Activated CD4-positive, alpha-beta T cell treated with anti-CD3 and anti-CD28 coated beads for 36 hours (primary cell): ENCODE measurements at regions of chr7 and their contacts with region 1.

Region 1: GRCh38 chr7:140696680-140697446 is at the start of gene NDUFB2:
- DNase-seq: peak; percentile 84
- ATAC-seq: peak; percentile 91
- H3K4me3 Mint-ChIP-seq: peak within 1 kb of the TSS; percentile 90
- H3K27ac Mint-ChIP-seq: peak within 1 kb of the TSS; percentile 97
- H3K4me1 Mint-ChIP-seq: peaks cover 30% of the 10 kb centered on the region
- H3K27me3 Mint-ChIP-seq: no peaks in the 10 kb centered on the region
- total RNA-seq, gene NDUFB2: 83.8 to 162 TPM

Region 2: DNA sequence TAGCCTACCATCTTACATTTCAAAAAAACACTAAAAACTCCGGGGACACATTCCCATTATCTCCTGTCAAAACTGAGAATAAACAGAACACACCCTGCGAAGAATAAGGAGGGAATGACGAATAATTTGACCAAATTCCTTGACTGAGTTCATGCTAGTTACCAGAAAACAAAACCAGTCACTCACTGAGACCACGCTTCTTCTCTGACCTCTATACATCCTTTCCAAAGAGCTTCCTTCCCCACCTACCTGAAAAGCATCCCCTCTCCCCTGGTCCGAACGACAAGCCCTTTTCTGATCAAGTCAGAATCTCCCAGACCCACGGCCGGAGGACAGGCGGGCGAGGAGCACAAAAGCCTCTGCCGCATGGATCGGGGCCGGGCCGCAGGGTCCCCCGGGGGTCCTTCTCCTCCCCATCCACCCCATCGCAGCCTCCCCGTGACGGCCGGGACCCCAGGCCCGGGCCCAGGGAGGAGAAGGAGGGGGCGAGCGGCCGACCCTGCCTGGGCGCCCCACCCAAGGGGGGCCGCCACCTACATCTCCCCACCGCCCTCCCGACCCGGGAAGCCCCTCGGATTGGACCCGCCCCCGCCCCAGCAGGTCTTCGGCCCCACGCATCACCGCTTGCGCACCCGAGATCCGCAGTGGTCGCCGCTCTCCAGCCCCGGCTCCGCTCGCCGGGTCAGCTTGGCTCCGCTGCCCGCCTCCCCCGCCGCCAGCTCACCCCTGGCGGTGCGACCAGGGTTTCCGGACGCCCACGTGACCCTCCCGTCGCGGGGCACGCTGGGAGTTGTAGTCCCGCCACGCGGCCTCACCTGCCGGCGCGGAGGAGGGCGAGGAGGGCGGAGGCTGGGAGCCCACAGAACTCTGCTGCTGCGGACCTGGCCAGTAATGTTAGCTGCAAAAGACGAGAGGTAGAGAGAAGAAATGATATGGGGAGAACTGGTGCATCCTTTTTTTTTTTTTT is 298.8 kb before region 1 on chr7 and contains the start of gene SLC37A3:
- CTCF ChIA-PET with region 1: no interaction called
- POLR2A ChIA-PET with region 1: no interaction called
- intact Hi-C with region 1: loop called in 1 of 2 experiments (anchors 2 kb)
- DNase-seq: peak; percentile 94
- ATAC-seq: peak; percentile 86
- H3K4me3 Mint-ChIP-seq: peak within 1 kb of the TSS; percentile 88
- H3K27ac Mint-ChIP-seq: peak within 1 kb of the TSS; percentile 91
- H3K4me1 Mint-ChIP-seq: peaks cover 37% of the 10 kb centered on the region
- H3K27me3 Mint-ChIP-seq: no peaks in the 10 kb centered on the region
- total RNA-seq, gene SLC37A3: 47.5 to 55.5 TPM

Region 3: DNA sequence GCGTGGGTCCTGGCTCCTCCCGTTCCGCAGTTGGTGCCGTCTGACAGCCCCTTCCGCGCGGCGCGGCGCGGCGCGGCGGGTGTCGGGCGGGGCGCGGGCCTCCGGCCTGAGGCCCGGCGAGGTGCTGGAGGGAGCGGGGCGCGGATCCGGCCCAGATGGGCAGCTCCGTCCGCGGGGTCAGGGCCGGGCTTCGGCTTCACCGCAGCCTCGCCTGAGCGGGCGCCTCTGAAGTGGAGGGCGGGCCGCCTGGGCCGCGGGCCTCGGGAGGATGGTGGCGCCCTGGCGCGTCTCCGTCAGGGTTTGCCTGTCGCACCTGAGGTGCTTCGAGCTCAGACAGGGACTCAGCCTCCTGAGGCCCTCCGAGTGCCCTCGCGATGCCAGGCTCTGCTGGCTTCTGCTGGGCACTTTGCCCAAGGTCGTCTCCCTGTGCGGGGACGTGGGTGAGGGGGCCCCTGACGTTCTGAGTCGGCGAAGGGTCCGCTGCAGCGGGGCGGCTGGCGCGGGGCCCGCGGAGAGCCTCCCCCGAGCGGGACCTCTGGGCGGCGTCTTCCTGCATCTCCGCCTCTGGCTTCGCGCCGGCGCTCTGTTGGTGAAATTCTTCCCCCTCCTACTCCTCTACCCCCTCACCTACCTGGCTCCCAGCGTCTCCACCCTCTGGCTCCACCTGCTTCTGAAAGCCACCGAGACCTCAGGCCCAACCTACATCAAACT is 23.6 kb before region 1 on chr7:
- CTCF ChIA-PET with region 1: interaction called, 8 read pairs
- POLR2A ChIA-PET with region 1: no interaction called
- intact Hi-C with region 1: loop called (anchors 1 kb)
- DNase-seq: peak; percentile 72
- ATAC-seq: peak; percentile 74
- H3K4me3 Mint-ChIP-seq: peak overlapping the region; percentile 85
- H3K27ac Mint-ChIP-seq: peak overlapping the region; percentile 87
- H3K4me1 Mint-ChIP-seq: peaks cover 35% of the 10 kb centered on the region
- H3K27me3 Mint-ChIP-seq: no peaks in the 10 kb centered on the region

Region 4: DNA sequence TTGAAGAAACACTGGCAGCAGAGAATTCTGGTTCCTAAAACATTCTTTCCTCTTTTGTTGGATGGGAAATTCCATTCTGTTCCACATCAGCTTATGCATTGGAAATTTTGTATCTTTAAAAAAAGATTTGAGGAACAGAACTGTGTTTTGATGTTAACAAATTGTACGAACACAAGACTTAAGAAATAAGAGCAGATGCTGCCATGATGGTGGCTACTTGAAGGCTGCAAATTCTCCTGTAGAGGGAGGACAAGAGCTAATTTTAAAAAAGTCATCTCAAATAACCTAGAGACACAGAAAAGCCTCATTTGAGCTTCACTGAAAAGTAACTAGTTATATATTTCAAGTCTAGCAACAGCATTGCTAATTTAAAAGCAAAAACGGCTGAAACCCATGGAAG is 29.4 kb after region 1 on chr7:
- CTCF ChIA-PET with region 1: interaction called, 3 read pairs
- POLR2A ChIA-PET with region 1: no interaction called
- intact Hi-C with region 1: loop called in 1 of 2 experiments (anchors 2 kb)
- DNase-seq: no peak
- ATAC-seq: no peak
- H3K4me3 Mint-ChIP-seq: no peak overlapping the region
- H3K27ac Mint-ChIP-seq: no peak overlapping the region
- H3K4me1 Mint-ChIP-seq: peaks cover 18% of the 10 kb centered on the region
- H3K27me3 Mint-ChIP-seq: no peaks in the 10 kb centered on the region

Region 5: DNA sequence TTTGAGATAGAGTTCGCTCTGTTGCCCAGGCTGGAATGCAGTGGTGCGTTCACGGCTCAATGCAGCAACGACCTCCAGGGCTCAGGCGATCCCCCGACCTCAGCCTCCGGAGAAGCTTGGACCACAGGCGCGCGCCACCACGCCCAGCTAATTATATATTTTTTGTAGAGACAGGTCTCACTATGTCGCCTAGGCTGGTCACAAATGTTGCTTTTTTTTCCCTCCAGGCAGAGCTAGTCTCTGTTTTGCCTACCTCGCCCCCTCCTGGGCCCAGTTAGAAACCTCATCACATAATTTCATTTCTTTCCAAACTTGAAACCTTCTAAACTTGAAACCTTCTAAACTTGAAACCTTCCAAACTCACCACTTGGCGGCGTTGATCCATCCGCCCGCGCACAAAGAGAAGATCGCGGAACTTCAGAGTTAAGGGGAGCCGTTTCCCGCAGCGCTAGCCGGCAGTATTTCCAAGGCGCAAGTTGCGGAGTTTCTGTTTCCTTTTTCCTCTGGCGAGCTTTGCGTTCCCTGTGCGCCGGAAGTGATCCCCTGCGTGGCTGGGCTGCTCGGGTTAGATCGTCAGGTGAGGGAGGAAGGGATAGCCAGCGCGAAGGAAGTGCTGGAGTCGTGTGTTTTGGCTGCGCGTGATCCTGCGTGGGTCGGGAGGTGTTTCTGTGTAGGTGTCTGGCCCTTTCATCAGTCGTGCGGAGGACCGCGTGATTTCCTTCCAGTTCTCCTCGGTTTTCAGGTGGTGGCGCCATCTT is 1041.2 kb after region 1 on chr7 and contains the start of gene SSBP1:
- CTCF ChIA-PET with region 1: no interaction called
- POLR2A ChIA-PET with region 1: no interaction called
- intact Hi-C with region 1: loop called in 1 of 2 experiments (anchors 2 kb)
- DNase-seq: peak; percentile 95
- ATAC-seq: peak; percentile 89
- H3K4me3 Mint-ChIP-seq: peak within 1 kb of the TSS; percentile 96
- H3K27ac Mint-ChIP-seq: peak within 1 kb of the TSS; percentile 97
- H3K4me1 Mint-ChIP-seq: peaks cover 40% of the 10 kb centered on the region
- H3K27me3 Mint-ChIP-seq: no peaks in the 10 kb centered on the region
- total RNA-seq, gene SSBP1: 183 to 245 TPM